Activated CD4-positive, alpha-beta T cell treated with anti-CD3 and anti-CD28 coated beads for 36 hours (primary cell): ENCODE measurements at regions of chr17 and their contacts with region 1.

Region 1: GRCh38 chr17:17849845-17850373 is 13.1 kb upstream of the SREBF1 start:
- DNase-seq: peak; percentile 90
- ATAC-seq: peak; percentile 64
- H3K4me3 Mint-ChIP-seq: peak overlapping the region; percentile 34
- H3K27ac Mint-ChIP-seq: peak overlapping the region; percentile 95
- H3K4me1 Mint-ChIP-seq: peaks cover 72% of the 10 kb centered on the region
- H3K27me3 Mint-ChIP-seq: no peaks in the 10 kb centered on the region

Region 2: DNA sequence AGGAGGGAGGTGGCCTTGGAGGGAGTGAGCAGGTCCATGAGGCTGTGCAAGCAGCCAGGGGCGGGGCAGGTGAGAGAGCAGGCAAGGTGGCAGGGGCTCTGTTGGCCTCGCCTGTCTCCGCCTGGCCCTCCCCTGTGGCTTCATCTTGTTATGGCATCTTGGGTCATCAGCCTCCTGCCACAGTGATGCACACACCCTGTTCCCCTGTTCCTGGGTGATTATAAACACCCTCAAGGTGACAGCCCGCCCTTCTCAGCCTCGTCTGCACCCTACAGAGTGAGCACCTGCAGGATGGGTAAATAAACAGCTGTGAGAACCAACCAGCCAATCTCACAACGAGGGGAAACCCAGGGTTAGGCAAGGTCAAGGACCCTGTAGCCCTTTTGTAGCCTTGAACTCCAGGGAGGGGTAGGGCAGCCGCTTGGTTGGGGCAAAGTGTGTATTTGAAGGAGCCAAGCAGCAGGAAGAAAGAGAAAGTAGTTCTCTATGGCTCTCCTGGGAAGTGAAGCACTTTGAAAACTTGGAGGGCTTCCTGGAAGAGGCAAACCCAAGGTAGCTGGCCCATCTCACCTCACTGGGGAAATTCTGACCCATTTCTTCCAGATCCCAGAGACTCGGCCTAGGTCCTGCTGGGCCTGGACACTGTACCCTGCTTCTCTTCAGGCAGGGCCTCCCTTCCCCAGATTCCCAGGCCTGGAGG is 486.1 kb before region 1 on chr17:
- CTCF ChIA-PET with region 1: no interaction called
- POLR2A ChIA-PET with region 1: no interaction called
- intact Hi-C with region 1: no loop called
- DNase-seq: no peak
- ATAC-seq: no peak
- H3K4me3 Mint-ChIP-seq: no peak overlapping the region
- H3K27ac Mint-ChIP-seq: no peak overlapping the region
- H3K4me1 Mint-ChIP-seq: no peaks in the 10 kb centered on the region
- H3K27me3 Mint-ChIP-seq: peaks cover 2% of the 10 kb centered on the region

Region 3: GRCh38 chr17:17694169-17695081 is 155.5 kb before region 1 on chr17:
- CTCF ChIA-PET with region 1: interaction called, 4 read pairs
- POLR2A ChIA-PET with region 1: no interaction called
- intact Hi-C with region 1: loop called in 1 of 2 experiments (anchors 1 kb)
- DNase-seq: peak; percentile 79
- ATAC-seq: peak; percentile 69
- H3K4me3 Mint-ChIP-seq: peak overlapping the region; percentile 81
- H3K27ac Mint-ChIP-seq: peak overlapping the region; percentile 98
- H3K4me1 Mint-ChIP-seq: peaks cover 66% of the 10 kb centered on the region
- H3K27me3 Mint-ChIP-seq: no peaks in the 10 kb centered on the region

Region 4: GRCh38 chr17:17812211-17813057 is 37.5 kb before region 1 on chr17:
- CTCF ChIA-PET with region 1: interaction called, 23 read pairs
- POLR2A ChIA-PET with region 1: no interaction called
- intact Hi-C with region 1: loop called in 1 of 2 experiments (anchors 2 kb)
- DNase-seq: peak; percentile 78
- ATAC-seq: peak; percentile 37
- H3K4me3 Mint-ChIP-seq: no peak overlapping the region
- H3K27ac Mint-ChIP-seq: no peak overlapping the region
- H3K4me1 Mint-ChIP-seq: peaks cover 11% of the 10 kb centered on the region
- H3K27me3 Mint-ChIP-seq: no peaks in the 10 kb centered on the region

Region 5: GRCh38 chr17:17823433-17824118 is 26.3 kb before region 1 on chr17:
- CTCF ChIA-PET with region 1: interaction called, 4 read pairs
- POLR2A ChIA-PET with region 1: interaction called, 6 read pairs
- intact Hi-C with region 1: loop called (anchors 1 to 2 kb)
- DNase-seq: peak; percentile 90
- ATAC-seq: peak; percentile 80
- H3K4me3 Mint-ChIP-seq: peak overlapping the region; percentile 72
- H3K27ac Mint-ChIP-seq: peak overlapping the region; percentile 96
- H3K4me1 Mint-ChIP-seq: peaks cover 92% of the 10 kb centered on the region
- H3K27me3 Mint-ChIP-seq: no peaks in the 10 kb centered on the region

Region 6: DNA sequence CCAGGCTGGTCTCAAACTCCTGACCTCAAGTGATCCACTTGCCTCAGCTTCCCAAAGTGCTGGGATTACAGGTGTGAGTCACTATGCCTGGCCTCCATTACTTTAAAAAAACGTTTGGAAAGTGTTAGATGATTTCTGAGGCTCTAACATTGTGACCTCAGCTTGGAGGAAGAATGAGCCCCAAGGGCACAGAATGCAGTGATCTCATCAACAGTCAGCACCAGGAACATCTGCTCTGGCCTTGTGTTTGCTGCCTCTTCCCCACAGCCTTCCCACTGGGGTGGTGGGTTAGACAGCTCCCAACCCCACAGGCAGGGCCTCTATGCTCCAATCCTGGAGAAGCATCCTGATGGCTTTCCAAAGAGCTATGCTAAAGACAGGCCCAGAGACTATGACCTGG is 24.6 kb after region 1 on chr17:
- CTCF ChIA-PET with region 1: no interaction called
- POLR2A ChIA-PET with region 1: no interaction called
- intact Hi-C with region 1: no loop called
- DNase-seq: no peak
- ATAC-seq: no peak
- H3K4me3 Mint-ChIP-seq: no peak overlapping the region
- H3K27ac Mint-ChIP-seq: no peak overlapping the region
- H3K4me1 Mint-ChIP-seq: no peaks in the 10 kb centered on the region
- H3K27me3 Mint-ChIP-seq: no peaks in the 10 kb centered on the region

Region 7: DNA sequence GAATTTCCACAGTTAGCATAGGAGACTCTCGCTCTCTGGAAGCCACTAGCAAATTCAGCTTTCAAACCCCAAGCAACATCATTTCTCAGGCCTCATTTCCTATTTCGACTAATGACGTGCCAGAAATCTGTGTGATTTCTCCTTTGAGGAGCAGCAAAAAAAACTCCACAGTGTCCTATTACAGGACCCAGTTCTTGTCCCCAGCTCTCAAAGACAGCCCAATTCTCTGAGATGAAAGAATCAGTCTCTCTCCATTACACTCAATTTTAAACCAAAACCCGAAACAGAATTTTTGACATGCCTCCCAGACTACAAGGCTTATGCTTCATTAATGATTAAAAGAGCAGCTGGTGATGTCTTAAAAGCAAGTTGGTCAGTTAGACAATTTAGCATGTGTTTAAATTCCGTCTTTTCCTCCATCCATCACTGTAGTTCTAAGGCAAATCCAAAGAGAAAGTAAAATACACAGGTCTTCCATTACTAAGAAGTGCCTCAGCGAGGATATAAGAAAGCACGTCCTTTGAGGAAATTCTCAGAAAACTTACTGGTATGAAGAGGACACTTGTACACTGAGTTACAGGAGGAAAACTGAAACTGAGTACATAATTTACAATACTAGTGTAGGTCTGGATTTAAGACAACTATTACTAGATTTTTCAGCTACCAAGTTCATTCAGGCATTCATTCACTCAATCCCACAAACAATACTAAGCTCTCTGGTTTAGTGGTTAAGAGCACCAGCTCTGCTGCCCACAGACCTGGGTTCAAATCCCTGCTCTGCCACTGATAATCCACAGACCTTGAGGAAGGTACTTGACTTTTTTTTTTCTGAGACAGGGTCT is 109.8 kb after region 1 on chr17:
- CTCF ChIA-PET with region 1: no interaction called
- POLR2A ChIA-PET with region 1: interaction called, 3 read pairs
- intact Hi-C with region 1: loop called in 1 of 2 experiments (anchors 1 kb)
- DNase-seq: peak; percentile 67
- ATAC-seq: peak; percentile 61
- H3K4me3 Mint-ChIP-seq: peak overlapping the region; percentile 71
- H3K27ac Mint-ChIP-seq: peak overlapping the region; percentile 95
- H3K4me1 Mint-ChIP-seq: peaks cover 69% of the 10 kb centered on the region
- H3K27me3 Mint-ChIP-seq: no peaks in the 10 kb centered on the region